ENCODE measurements at regions of chr19 and their contacts with region 1.

Region 1: GRCh38 chr19:15177269-15178116 is 23.3 kb downstream of the NOTCH3 start:
- DNase-seq: peak; percentile 95
- H3K4me3 ChIP-seq: peak overlapping the region in 1 of 2 experiments; percentile 37; a peak in 2 of 4 replicates
- H3K27ac ChIP-seq: no peak overlapping the region
- H3K4me1 ChIP-seq: peaks cover 0 to 2% of the 10 kb centered on the region in 2 experiments; a peak in 1 of 4 replicates
- H3K27me3 ChIP-seq: no peaks in the 10 kb centered on the region
- CTCF ChIP-seq: peak; percentile 77
- EP300 ChIP-seq: no peak
- RAD21 ChIP-seq: peak; percentile 87

Region 2: DNA sequence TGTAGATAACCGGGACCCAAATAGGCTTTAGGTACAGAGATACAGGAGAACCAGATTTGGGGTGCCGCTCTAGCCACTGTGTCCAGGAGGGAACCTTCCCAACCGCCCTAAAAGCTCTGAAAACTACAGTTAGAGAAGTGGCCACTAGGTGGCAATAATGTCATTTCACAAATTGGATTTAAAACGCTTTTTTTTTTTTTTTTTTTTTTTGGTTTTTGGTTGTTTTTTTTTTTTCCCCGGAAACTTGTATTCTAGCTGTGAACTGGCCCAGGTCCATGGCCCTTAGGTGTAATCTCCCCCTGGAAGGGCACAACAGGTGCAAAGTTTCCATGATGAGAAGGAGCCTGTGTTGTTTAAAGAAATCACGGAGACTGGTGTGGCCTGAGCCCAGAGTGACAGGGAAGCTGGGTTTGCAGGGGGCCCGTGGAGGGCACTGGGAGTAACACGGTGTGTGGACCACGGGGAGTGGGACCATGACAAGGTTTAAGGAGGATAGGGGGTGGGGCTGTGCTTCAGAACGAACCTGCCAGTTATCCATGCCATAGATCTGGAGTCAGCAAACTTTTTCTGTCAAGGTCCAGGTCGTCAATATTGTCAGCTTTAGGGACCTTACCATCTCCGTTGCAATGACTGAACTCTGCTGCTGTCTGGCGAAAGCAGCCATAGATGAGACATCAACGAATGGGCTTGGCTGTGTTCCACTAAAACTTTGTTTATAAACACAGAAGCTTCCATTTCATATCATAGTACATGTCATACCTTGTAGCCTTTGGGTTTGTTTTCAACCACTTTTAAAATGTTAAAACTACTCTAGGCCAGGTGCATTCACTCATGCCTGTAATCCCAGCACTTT is 85.4 kb before region 1 on chr19:
- CTCF ChIA-PET with region 1: interaction called, 21 read pairs
- POLR2A ChIA-PET with region 1: no interaction called
- DNase-seq: peak; percentile 50
- H3K4me3 ChIP-seq: no peak overlapping the region
- H3K27ac ChIP-seq: no peak overlapping the region
- H3K4me1 ChIP-seq: no peaks in the 10 kb centered on the region; a peak in 1 of 4 replicates
- H3K27me3 ChIP-seq: peaks cover 37% of the 10 kb centered on the region
- CTCF ChIP-seq: peak; percentile 73
- EP300 ChIP-seq: no peak
- RAD21 ChIP-seq: peak; percentile 80

Region 3: DNA sequence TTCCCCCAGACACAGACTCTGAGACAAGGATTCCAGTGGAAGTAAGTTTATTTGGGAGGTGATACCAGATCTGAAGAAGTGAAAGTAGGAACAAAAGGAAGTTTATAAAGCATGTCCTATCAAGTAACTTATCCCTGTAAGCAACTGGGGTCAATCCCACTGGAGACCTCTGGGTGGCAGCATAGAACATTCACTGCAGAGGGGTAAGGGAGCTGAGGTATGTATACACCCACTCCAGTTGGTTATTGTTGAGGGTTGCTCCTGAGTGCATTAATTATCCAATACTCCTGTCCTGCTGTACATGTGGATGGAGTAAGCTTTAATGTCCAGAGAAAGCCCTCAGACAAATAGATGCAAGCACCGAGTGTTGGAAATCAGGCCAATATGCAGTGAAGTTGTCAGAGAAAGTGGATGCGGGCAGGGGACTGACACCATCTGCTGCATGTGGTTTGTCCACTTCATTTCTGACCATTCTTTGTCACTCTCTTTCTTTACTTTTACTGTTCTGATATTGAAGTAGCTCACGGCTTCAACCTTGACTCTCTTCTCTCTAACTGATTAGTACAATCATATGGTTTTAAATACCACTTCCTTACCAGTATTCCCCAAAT is 23.4 kb before region 1 on chr19:
- CTCF ChIA-PET with region 1: interaction called, 18 read pairs
- POLR2A ChIA-PET with region 1: no interaction called
- DNase-seq: peak; percentile 54
- H3K4me3 ChIP-seq: 0 out of 4 replicates have a peak overlapping the region, but pooled peaks of 1 of the 2 experiments have one; percentile 2
- H3K27ac ChIP-seq: no peak overlapping the region
- H3K4me1 ChIP-seq: no peaks in the 10 kb centered on the region
- H3K27me3 ChIP-seq: peaks cover 14% of the 10 kb centered on the region; the same call in 1 of the 2 replicates
- CTCF ChIP-seq: peak; percentile 61
- EP300 ChIP-seq: no peak
- RAD21 ChIP-seq: peak; percentile 38

Region 4: GRCh38 chr19:15188851-15189250 is 11.4 kb after region 1 on chr19:
- CTCF ChIA-PET with region 1: interaction called, 15 read pairs
- POLR2A ChIA-PET with region 1: no interaction called
- DNase-seq: no peak
- H3K4me3 ChIP-seq: no peak overlapping the region
- H3K27ac ChIP-seq: no peak overlapping the region
- H3K4me1 ChIP-seq: no peaks in the 10 kb centered on the region
- H3K27me3 ChIP-seq: no peaks in the 10 kb centered on the region
- CTCF ChIP-seq: no peak
- EP300 ChIP-seq: no peak
- RAD21 ChIP-seq: no peak

Region 5: DNA sequence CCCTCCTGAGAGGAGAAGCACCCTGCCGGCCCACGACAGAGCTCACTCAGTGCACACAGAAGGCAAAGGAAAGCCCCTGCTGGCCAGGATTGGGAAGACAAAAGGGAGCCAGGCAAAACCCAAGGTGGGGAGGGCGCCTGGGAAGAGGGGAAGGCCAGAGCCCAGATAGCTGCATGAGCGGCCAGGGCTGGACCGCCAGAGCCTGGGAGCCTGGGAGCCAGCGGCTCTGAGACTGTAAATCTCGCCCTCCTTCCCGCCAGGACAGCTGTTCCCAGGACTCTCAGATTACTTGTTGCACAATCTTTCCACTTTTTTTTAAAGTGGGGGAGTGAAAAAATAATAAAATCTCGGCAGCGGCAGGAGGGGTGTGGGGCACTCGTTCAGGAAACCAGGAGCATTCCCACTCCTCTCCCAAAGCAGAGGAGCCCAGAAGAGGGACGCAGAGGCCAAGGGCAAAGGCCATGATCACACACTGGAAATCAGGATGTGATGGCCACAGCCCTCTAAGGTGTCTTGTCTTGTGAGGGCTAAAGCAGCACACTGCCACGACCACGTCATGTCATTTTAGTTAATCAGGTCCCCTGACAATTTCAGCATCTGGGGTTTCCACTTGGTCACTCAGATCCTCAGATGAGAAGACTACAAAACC is 74.4 kb after region 1 on chr19:
- CTCF ChIA-PET with region 1: interaction called, 39 read pairs
- POLR2A ChIA-PET with region 1: no interaction called
- DNase-seq: peak; percentile 77
- H3K4me3 ChIP-seq: 0 out of 4 replicates have a peak overlapping the region, but pooled peaks of 1 of the 2 experiments have one; percentile 4
- H3K27ac ChIP-seq: peak overlapping the region; percentile 43 to 97
- H3K4me1 ChIP-seq: peaks cover 17 to 47% of the 10 kb centered on the region in 2 experiments
- H3K27me3 ChIP-seq: no peaks in the 10 kb centered on the region
- CTCF ChIP-seq: peak; percentile 60
- EP300 ChIP-seq: no peak
- RAD21 ChIP-seq: peak; percentile 43

Region 6: GRCh38 chr19:15562145-15562544 is 384.7 kb after region 1 on chr19:
- CTCF ChIA-PET with region 1: interaction called, 20 read pairs
- POLR2A ChIA-PET with region 1: no interaction called
- DNase-seq: no peak
- H3K4me3 ChIP-seq: no peak overlapping the region
- H3K27ac ChIP-seq: no peak overlapping the region
- H3K4me1 ChIP-seq: no peaks in the 10 kb centered on the region; a peak in 1 of 4 replicates
- H3K27me3 ChIP-seq: peaks cover 10% of the 10 kb centered on the region; the same call in 1 of the 2 replicates
- CTCF ChIP-seq: no peak
- EP300 ChIP-seq: no peak
- RAD21 ChIP-seq: no peak